Endothelial cell of umbilical vein (primary cell): ENCODE measurements at regions of chr10 and their contacts with region 1.

Region 1: GRCh38 chr10:63819753-63820329 is 298.6 kb downstream of the REEP3 start:
- DNase-seq: peak; percentile 78
- H3K4me3 ChIP-seq: no peak overlapping the region
- H3K27ac ChIP-seq: no peak overlapping the region
- H3K4me1 ChIP-seq: no peaks in the 10 kb centered on the region
- H3K27me3 ChIP-seq: peaks cover 11% of the 10 kb centered on the region in 2 experiments
- CTCF ChIP-seq: peak; percentile 74
- POLR2A ChIP-seq: no peak

Region 2: DNA sequence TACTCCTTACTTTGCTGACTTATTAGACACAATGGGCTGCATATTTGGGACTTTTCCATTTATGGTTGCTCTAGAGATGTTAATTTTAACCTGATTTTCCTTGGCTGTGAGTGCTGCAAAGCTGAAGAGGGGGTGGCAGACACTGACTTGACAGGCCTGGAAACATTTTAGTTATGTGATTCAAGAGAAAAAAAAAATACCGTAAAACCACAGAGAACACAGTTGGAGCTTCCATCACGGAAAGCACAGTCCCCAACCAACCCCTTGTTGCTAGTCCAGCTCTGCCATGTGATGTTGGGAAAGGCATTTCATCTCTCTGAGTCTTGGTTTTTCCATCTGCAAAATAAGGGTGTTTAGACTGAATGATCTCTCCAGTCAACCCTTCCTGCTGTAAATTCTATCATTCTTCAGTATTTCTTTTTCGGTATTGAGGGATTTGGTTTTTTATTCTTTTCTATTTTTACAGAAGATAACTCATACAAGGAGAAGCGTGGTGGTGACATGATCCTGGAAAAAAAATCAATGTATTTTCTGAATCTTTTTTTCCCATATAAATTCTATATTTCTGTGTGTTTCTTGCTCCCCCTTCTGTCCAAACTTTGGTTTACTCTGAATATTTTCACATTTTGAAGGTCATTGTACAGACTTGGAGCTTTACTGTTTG is 52.6 kb before region 1 on chr10:
- CTCF ChIA-PET with region 1: interaction called, 26 read pairs
- POLR2A ChIA-PET with region 1: no interaction called
- dilution Hi-C with region 1: no loop called
- intact Hi-C with region 1: loop called (anchors 1 kb)
- DNase-seq: peak; percentile 70
- H3K4me3 ChIP-seq: no peak overlapping the region
- H3K27ac ChIP-seq: no peak overlapping the region
- H3K4me1 ChIP-seq: no peaks in the 10 kb centered on the region
- H3K27me3 ChIP-seq: no peaks in the 10 kb centered on the region
- CTCF ChIP-seq: peak in 1 of 2 donors; percentile 33
- POLR2A ChIP-seq: no peak

Region 3: DNA sequence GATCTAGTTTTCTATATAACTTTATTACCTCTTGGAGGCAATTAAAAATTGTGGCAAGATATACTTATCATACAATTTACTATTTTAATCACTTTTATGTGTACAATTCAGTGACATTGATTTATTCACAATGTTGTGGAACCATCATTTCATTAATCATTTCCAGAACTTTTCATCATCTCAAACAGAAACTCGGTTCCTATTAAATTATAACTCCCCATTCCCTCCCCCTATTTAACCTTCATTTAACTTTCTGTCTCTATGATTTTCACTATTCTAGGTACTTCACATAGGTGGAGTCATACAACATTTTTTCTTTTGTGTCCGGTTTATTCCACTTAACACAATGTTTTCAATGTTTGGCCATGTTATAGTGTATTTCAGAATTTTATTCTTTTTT is 45.9 kb before region 1 on chr10:
- CTCF ChIA-PET with region 1: interaction called, 26 read pairs
- POLR2A ChIA-PET with region 1: no interaction called
- dilution Hi-C with region 1: no loop called
- intact Hi-C with region 1: no loop called
- DNase-seq: no peak
- H3K4me3 ChIP-seq: no peak overlapping the region
- H3K27ac ChIP-seq: no peak overlapping the region
- H3K4me1 ChIP-seq: peaks cover 15% of the 10 kb centered on the region
- H3K27me3 ChIP-seq: no peaks in the 10 kb centered on the region
- CTCF ChIP-seq: no peak
- POLR2A ChIP-seq: no peak

Region 4: DNA sequence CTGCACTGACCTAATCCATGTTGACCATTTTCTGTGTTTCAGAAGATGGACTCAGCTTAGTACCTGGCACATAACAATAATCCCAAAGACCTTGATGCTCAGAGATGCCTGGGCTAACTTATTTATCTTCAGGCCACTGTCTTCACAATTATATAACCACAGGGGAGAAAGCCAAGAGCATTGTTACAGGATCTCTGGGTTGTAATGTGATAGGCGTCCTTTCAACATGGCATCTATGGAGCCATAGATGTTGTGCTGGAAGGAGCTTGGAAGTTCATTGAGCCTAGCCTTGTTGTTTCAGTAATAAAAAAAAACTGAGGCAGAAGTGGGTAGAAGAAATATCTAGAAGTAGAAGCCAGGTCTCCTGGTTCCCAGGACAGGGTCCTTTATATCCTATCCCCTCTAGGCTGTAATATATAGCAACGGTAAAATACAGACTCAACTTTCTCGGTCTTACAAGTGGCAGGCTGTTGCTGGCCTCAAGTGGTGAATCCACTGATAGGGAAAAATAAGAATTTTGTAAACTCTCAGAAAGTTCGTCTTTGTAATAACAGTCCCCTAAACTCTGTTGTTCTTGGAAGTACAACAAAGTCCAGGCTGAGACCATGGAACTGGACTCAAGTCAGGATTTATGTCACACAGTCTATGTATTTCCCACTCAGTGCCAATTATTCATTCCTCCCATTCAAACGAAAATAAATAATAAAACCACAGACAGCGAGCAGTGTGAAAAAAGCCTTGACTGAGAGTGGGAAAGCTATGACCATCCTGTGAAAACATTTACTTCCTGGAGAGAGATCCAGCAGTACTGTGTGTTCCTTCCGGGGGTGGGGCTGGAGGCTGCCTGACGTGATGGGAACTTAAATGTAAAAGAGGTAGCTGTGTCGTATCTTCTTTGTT is 21.0 kb before region 1 on chr10:
- CTCF ChIA-PET with region 1: interaction called, 20 read pairs
- POLR2A ChIA-PET with region 1: no interaction called
- dilution Hi-C with region 1: no loop called
- intact Hi-C with region 1: loop called (anchors 1 kb)
- DNase-seq: peak; percentile 97
- H3K4me3 ChIP-seq: peak overlapping the region in 1 of 3 experiments; percentile 22
- H3K27ac ChIP-seq: peak overlapping the region; percentile 88
- H3K4me1 ChIP-seq: peaks cover 16% of the 10 kb centered on the region
- H3K27me3 ChIP-seq: no peaks in the 10 kb centered on the region
- CTCF ChIP-seq: no peak
- POLR2A ChIP-seq: peak; percentile 50

Region 5: DNA sequence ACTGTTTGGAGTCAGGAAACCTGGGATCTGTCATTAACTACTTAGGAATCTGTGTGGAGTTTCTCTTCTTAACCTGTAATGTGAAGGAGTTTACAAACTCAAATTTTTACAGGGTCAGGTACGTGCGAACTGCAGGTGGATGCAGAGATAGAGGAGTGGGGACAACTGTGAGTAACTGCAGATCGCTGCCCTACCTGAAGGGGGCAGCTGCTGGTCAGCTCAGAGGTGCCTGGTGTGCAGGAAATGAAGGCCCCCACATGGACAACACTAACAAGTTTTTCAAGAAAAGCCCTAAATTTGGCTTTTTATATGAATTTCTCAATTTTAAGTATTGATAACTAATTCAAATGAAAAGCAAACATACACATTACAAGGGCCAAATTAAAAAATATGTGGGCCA is 81.4 kb after region 1 on chr10:
- CTCF ChIA-PET with region 1: no interaction called
- POLR2A ChIA-PET with region 1: no interaction called
- dilution Hi-C with region 1: no loop called
- intact Hi-C with region 1: no loop called
- DNase-seq: no peak
- H3K4me3 ChIP-seq: no peak overlapping the region
- H3K27ac ChIP-seq: no peak overlapping the region
- H3K4me1 ChIP-seq: no peaks in the 10 kb centered on the region
- H3K27me3 ChIP-seq: no peaks in the 10 kb centered on the region
- CTCF ChIP-seq: no peak
- POLR2A ChIP-seq: no peak